ENCODE measurements at regions of chr5 and their contacts with region 1.

Region 1: GRCh38 chr5:108415726-108416125 is 33.8 kb upstream of the FBXL17 start:
- DNase-seq: no peak
- H3K4me3 ChIP-seq: no peak overlapping the region
- H3K27ac ChIP-seq: no peak overlapping the region
- H3K4me1 ChIP-seq: no peaks in the 10 kb centered on the region
- H3K27me3 ChIP-seq: no peaks in the 10 kb centered on the region
- CTCF ChIP-seq: no peak

Region 2: DNA sequence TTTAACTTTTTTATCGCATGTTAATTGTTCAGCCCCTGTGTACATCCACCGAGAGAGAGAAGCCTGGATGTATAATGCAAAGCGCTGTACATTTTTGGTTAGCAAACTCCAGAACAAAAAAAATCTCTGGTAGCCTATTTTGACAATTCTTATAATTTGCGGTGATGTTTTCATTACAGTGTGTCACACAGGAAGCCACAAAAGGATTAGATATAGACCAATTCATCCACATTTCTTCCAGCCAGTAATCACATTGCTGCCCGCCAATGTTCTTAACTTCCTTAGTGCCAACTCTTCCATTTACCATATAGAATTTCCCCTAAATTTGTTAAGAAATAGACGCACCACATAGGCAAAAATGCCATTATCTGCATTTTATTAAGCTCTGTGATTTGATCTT is 1180.6 kb before region 1 on chr5:
- CTCF ChIA-PET with region 1: no interaction called
- POLR2A ChIA-PET with region 1: interaction called, 10 read pairs
- intact Hi-C with region 1: no loop called
- DNase-seq: no peak
- H3K4me3 ChIP-seq: no peak overlapping the region
- H3K27ac ChIP-seq: no peak overlapping the region
- H3K4me1 ChIP-seq: no peaks in the 10 kb centered on the region
- H3K27me3 ChIP-seq: no peaks in the 10 kb centered on the region
- CTCF ChIP-seq: no peak

Region 3: GRCh38 chr5:108681079-108681921 is 265.6 kb after region 1 on chr5:
- CTCF ChIA-PET with region 1: no interaction called
- POLR2A ChIA-PET with region 1: no interaction called
- intact Hi-C with region 1: no loop called
- DNase-seq: peak; percentile 33 to 47
- H3K4me3 ChIP-seq: no peak overlapping the region
- H3K27ac ChIP-seq: no peak overlapping the region
- H3K4me1 ChIP-seq: no peaks in the 10 kb centered on the region
- H3K27me3 ChIP-seq: no peaks in the 10 kb centered on the region
- CTCF ChIP-seq: peak; percentile 82